OCI-LY7 (cell line): ENCODE measurements at regions of chr19 and their contacts with region 1.

Region 1: DNA sequence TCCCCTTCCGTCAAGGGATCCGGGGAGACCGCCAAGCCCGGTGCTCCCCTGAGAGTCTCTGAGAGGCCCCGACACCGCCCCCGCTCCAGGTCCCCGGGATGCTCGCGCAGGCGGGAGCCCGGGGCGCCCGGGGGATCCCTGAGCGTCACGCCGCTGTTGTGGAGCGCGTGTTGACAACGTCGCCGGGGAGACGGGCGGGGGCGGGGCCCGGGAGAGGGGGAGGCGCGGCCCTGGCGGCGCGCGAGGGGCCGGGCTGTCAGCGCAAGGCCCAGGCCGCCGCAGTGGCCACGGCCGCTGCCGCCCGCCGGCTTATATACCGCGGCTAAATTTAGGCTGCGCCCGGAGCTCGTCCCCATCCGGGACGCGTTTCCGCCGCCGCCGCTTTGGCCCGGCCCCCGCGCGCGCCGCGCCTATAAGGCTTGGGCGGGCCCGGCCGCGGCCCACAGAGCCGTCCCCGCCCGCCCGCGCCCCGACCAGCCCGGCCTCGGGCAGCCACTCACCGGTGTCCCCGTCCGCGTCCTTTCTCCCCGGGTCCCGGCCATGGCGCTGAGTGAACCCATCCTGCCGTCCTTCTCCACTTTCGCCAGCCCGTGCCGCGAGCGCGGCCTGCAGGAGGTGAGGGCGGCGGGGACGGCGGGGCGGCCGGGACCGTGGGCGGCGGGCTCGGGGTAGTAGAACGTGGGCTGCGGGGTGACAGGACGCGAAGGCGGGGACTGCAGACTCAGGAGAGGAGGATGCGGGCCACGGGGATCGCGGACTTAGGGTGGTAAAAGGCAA is at the start of gene KLF2:
- DNase-seq: peak; percentile 86
- H3K4me3 ChIP-seq: peak within 1 kb of the TSS; percentile 71
- H3K27ac ChIP-seq: no peak within 1 kb of the TSS
- H3K4me1 ChIP-seq: peaks cover 88% of the 10 kb centered on the region
- CTCF ChIP-seq: no peak
- total RNA-seq, gene KLF2: 4.5 and 8.6 TPM in 2 replicates

Region 2: GRCh38 chr19:16247353-16248182 is 77.0 kb before region 1 on chr19:
- CTCF ChIA-PET with region 1: no interaction called
- POLR2A ChIA-PET with region 1: interaction called, 3 read pairs
- intact Hi-C with region 1: loop called (anchors 1 kb)
- DNase-seq: peak; percentile 85
- H3K4me3 ChIP-seq: no peak overlapping the region
- H3K27ac ChIP-seq: no peak overlapping the region
- H3K4me1 ChIP-seq: peaks cover 9% of the 10 kb centered on the region
- CTCF ChIP-seq: peak; percentile 95

Region 3: DNA sequence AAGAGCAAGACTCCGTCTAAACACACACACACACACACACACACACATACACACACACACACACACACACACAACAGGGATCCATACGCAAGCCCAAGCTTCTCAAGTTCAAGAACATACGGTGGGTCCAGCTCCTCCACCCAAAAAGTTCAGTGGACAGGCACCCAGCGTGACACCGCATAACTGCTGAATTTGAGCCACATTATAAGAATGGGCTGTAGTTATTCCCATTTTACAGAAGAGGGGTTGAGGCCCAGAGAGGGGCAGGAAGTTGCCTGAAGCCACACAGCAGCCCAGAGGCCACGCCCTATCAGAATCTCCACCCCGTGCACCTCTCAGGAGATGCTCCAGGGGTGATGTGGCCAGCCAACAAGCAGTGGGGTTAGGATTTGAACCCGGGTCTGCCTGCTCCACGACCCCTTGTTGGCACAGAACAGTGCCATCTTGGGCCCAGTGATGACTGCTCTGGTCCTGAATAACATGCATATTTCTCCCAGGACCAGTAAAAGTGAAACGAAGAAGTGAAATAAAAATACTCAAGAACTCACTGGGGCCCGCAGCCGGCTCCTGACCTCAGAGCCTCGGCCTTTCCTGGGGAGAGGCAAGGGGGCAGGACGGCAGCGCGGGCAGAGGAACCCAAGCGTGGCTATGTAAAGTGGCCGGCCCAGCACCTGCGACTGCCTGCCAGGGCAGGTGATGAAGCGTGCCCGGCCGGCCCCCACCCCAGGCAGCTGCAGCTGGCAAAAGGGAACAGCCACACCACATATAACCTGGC is 65.0 kb before region 1 on chr19:
- CTCF ChIA-PET with region 1: no interaction called
- POLR2A ChIA-PET with region 1: interaction called, 7 read pairs
- intact Hi-C with region 1: loop called (anchors 1 kb)
- DNase-seq: peak; percentile 96
- H3K4me3 ChIP-seq: peak overlapping the region; percentile 45
- H3K27ac ChIP-seq: peak overlapping the region; percentile 91
- H3K4me1 ChIP-seq: peaks cover 81% of the 10 kb centered on the region
- CTCF ChIP-seq: peak; percentile 19; the same call in 1 of the 2 replicates

Region 4: DNA sequence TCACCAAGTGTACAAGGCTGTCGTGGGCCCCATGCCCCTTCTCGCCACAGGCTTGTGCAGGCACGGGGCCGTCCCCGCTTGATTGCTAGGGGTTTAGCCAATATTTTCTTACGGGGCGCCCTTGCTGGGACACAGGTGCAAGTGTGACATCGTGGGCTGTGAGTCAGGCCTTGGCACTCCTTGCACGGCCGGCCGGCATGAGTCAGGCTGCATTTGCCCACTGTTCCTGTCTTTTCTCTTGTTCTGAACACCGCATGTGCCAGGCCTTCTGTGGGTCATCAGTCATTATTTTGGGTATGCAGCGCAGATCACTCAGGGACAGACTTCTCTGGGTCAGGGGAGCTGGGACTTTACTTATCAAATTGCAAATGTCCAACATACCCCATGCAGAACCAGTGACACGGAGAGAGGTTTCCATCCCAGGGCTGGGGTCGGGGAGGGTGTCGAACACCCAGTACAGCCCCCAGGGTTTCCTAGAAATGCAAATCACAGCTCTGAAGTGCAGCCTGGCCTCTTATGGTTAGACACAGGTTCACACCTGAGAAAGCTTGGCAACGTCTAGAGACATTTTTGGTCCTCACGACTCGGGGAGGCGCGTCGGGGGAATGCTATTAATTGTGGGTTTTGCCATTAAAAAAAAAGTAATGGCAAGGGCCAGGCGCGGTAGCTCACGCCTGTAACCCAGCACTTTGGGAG is 22.4 kb before region 1 on chr19:
- CTCF ChIA-PET with region 1: no interaction called
- POLR2A ChIA-PET with region 1: interaction called, 5 read pairs
- intact Hi-C with region 1: loop called (anchors 1 kb)
- DNase-seq: peak; percentile 90
- H3K4me3 ChIP-seq: peak overlapping the region; percentile 35
- H3K27ac ChIP-seq: peak overlapping the region; percentile 93
- H3K4me1 ChIP-seq: peaks cover 64% of the 10 kb centered on the region
- CTCF ChIP-seq: no peak

Region 5: DNA sequence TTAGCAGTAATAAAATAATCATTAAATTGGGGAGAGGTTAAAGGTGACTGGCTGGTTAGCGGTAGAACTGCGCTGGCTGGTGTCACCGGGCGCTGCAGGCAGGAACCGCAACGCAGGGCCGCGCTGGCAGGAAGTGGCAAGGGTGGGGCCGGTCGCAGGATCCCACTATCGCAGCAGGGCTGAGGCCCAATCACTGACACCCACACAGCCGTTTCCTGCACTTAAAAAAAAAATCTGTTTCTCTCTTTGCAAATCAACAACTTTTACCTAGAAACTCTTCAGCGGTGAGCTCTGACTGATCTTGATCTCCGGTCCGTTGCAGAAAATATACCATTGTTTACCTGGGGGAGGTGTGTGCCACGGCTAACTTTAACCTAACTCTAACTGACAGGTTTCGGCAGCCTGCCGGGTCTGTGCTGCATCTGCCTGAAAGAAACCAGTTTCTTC is 47.0 kb after region 1 on chr19:
- CTCF ChIA-PET with region 1: no interaction called
- POLR2A ChIA-PET with region 1: interaction called, 3 read pairs
- intact Hi-C with region 1: loop called (anchors 1 kb)
- DNase-seq: peak; percentile 92
- H3K4me3 ChIP-seq: peak overlapping the region; percentile 51
- H3K27ac ChIP-seq: peak overlapping the region; percentile 86
- H3K4me1 ChIP-seq: peaks cover 70% of the 10 kb centered on the region
- CTCF ChIP-seq: no peak

Region 6: GRCh38 chr19:16382775-16383543 is 58.4 kb after region 1 on chr19:
- CTCF ChIA-PET with region 1: interaction called, 6 read pairs
- POLR2A ChIA-PET with region 1: interaction called, 12 read pairs
- intact Hi-C with region 1: loop called (anchors 1 kb)
- DNase-seq: peak; percentile 82
- H3K4me3 ChIP-seq: peak overlapping the region; percentile 15
- H3K27ac ChIP-seq: peak overlapping the region; percentile 61
- H3K4me1 ChIP-seq: peaks cover 30% of the 10 kb centered on the region
- CTCF ChIP-seq: peak; percentile 91